MCF 10A (cell line): ENCODE measurements at regions of chr17 and their contacts with region 1.

Region 1: GRCh38 chr17:63478791-63479494 is 2.1 kb downstream of the ACE start:
- DNase-seq: peak; percentile 91
- H3K4me3 Mint-ChIP-seq: no peak overlapping the region
- H3K27ac Mint-ChIP-seq: no peak overlapping the region
- H3K4me1 Mint-ChIP-seq: no peaks in the 10 kb centered on the region
- H3K27me3 Mint-ChIP-seq: no peaks in the 10 kb centered on the region
- CTCF ChIP-seq: peak; percentile 88

Region 2: GRCh38 chr17:63425482-63425881 is 53.5 kb before region 1 on chr17:
- CTCF ChIA-PET with region 1: interaction called, 216 read pairs
- POLR2A ChIA-PET with region 1: interaction called, 22 read pairs
- intact Hi-C with region 1: loop called (anchors 1 kb)
- DNase-seq: peak; percentile 79
- H3K4me3 Mint-ChIP-seq: no peak overlapping the region
- H3K27ac Mint-ChIP-seq: no peak overlapping the region
- H3K4me1 Mint-ChIP-seq: peaks cover 11% of the 10 kb centered on the region
- H3K27me3 Mint-ChIP-seq: no peaks in the 10 kb centered on the region
- CTCF ChIP-seq: peak; percentile 94

Region 3: GRCh38 chr17:63445979-63446691 is 32.8 kb before region 1 on chr17 and contains the start of gene CYB561:
- CTCF ChIA-PET with region 1: interaction called, 62 read pairs
- POLR2A ChIA-PET with region 1: interaction called, 24 read pairs
- intact Hi-C with region 1: loop called (anchors 1 kb)
- DNase-seq: peak; percentile 70
- H3K4me3 Mint-ChIP-seq: peak within 1 kb of the TSS; percentile 68
- H3K27ac Mint-ChIP-seq: peak within 1 kb of the TSS; percentile 90
- H3K4me1 Mint-ChIP-seq: peaks cover 16% of the 10 kb centered on the region
- H3K27me3 Mint-ChIP-seq: no peaks in the 10 kb centered on the region
- CTCF ChIP-seq: peak; percentile 64
- total RNA-seq, gene CYB561: 57.2 and 62.0 TPM in 2 replicates

Region 4: DNA sequence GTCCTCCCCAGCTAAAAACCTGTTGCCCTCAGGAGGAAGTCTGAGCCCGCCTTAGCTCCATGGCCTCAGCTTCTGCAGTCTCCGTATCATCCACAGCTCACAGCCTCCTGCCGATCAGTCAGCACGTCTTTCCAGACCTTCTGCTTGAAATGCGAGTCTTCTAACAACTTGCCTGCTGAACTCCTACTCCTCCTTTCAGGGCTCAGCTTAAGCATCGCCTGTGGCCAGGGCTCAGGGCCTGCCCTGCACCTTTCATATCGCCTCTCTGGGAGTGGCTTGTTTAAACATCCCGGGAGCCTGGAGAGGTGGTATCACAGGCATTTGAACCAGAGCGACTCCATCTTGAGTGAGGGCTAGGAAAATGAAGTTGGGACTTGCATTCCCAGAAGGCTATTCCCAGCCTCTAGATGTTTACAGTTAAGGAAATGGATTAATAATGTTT is 19.0 kb before region 1 on chr17:
- CTCF ChIA-PET with region 1: interaction called, 16 read pairs
- POLR2A ChIA-PET with region 1: interaction called, 17 read pairs
- intact Hi-C with region 1: no loop called
- DNase-seq: no peak
- H3K4me3 Mint-ChIP-seq: no peak overlapping the region
- H3K27ac Mint-ChIP-seq: no peak overlapping the region
- H3K4me1 Mint-ChIP-seq: peaks cover 26% of the 10 kb centered on the region
- H3K27me3 Mint-ChIP-seq: no peaks in the 10 kb centered on the region
- CTCF ChIP-seq: no peak

Region 5: DNA sequence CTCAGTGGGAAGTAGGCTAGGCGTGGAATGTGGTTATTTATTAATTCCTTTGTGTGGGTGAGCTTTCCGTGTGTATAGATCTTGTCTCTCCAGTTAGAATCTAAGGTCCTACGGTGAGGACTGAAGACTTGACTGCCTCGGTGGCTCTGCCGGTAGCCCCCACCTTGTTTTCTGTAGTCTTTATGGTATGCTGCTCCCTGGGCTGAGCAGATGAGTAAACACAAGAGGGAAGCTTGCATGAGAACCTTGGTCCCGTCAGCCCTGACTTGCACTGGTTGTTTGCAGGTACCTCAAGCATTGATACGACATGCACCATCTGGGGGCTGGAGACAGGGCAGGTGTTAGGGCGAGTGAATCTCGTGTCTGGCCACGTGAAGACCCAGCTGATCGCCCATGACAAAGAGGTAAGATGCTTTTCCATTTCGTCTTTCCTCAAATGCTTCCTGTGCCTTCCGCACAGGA is 100.6 kb after region 1 on chr17:
- CTCF ChIA-PET with region 1: interaction called, 10 read pairs
- POLR2A ChIA-PET with region 1: no interaction called
- intact Hi-C with region 1: no loop called
- DNase-seq: no peak
- H3K4me3 Mint-ChIP-seq: no peak overlapping the region
- H3K27ac Mint-ChIP-seq: no peak overlapping the region
- H3K4me1 Mint-ChIP-seq: no peaks in the 10 kb centered on the region
- H3K27me3 Mint-ChIP-seq: no peaks in the 10 kb centered on the region
- CTCF ChIP-seq: no peak